Ovary (tissue), 10 donors: ENCODE measurements at regions of chr2 and their contacts with region 1.

Region 1: GRCh38 chr2:173402405-173402974 is 47.8 kb downstream of the CDCA7 start:
- DNase-seq: peak; percentile 64 to 79 (median 75)
- H3K4me3 ChIP-seq: no peak overlapping the region
- H3K27ac ChIP-seq: no peak overlapping the region
- H3K4me1 ChIP-seq: no peaks in the 10 kb centered on the region
- H3K27me3 ChIP-seq: no peaks in the 10 kb centered on the region
- CTCF ChIP-seq: peak; percentile 54 to 82 (median 79)
- EP300 ChIP-seq: no peak
- POLR2A ChIP-seq: no peak

Region 2: GRCh38 chr2:173448938-173449471 is 46.5 kb after region 1 on chr2:
- intact Hi-C with region 1: loop called in 1 of 4 experiments (anchors 5 kb)
- DNase-seq: peak in 4 of 5 donors; percentile 24 to 74 (median 46)
- H3K4me3 ChIP-seq: no peak overlapping the region
- H3K27ac ChIP-seq: no peak overlapping the region
- H3K4me1 ChIP-seq: no peaks in the 10 kb centered on the region
- H3K27me3 ChIP-seq: no peaks in the 10 kb centered on the region
- CTCF ChIP-seq: no peak
- EP300 ChIP-seq: no peak
- POLR2A ChIP-seq: no peak

Region 3: DNA sequence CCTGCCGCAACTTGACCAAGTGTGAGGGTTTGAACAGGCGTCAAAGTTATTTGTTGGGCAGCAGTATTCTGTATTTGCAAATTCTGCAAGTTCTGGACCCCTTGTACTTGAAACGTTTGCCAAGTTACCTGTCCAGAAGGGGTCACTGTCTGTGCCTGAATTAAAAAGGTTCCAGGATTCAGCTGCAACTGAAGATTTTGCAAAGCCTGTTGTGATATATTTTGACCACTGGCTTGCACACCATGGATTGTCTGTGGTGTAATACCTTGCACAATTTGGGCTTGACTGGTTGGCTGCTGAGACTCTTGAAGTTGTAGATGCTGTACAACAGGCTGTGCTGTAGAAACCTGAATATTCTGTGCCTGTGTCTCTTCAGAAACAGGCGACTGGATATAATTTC is 552.5 kb after region 1 on chr2:
- intact Hi-C with region 1: loop called in 1 of 4 experiments (anchors 10 kb)
- DNase-seq: no peak
- H3K4me3 ChIP-seq: no peak overlapping the region
- H3K27ac ChIP-seq: no peak overlapping the region
- H3K4me1 ChIP-seq: peaks cover 4% of the 10 kb centered on the region
- H3K27me3 ChIP-seq: no peaks in the 10 kb centered on the region
- CTCF ChIP-seq: no peak
- EP300 ChIP-seq: no peak
- POLR2A ChIP-seq: no peak

Region 4: GRCh38 chr2:174051741-174052583 is 649.5 kb after region 1 on chr2:
- intact Hi-C with region 1: loop called in 1 of 4 experiments (anchors 10 kb)
- DNase-seq: peak in 3 of 5 donors; percentile 39 to 70 (median 43)
- H3K4me3 ChIP-seq: no peak overlapping the region
- H3K27ac ChIP-seq: no peak overlapping the region
- H3K4me1 ChIP-seq: peaks cover 6% of the 10 kb centered on the region
- H3K27me3 ChIP-seq: no peaks in the 10 kb centered on the region
- CTCF ChIP-seq: no peak
- EP300 ChIP-seq: no peak
- POLR2A ChIP-seq: no peak

Region 5: GRCh38 chr2:174341286-174341994 is 939.0 kb after region 1 on chr2:
- intact Hi-C with region 1: loop called (anchors 1 to 5 kb)
- DNase-seq: peak; percentile 72 to 91 (median 86)
- H3K4me3 ChIP-seq: no peak overlapping the region
- H3K27ac ChIP-seq: no peak overlapping the region
- H3K4me1 ChIP-seq: peaks cover 7% of the 10 kb centered on the region
- H3K27me3 ChIP-seq: peaks cover 10% of the 10 kb centered on the region
- CTCF ChIP-seq: peak; percentile 82 to 86 (median 84)
- EP300 ChIP-seq: no peak
- POLR2A ChIP-seq: no peak